A549 (cell line): ENCODE measurements at regions of chr15 and their contacts with region 1.

Region 1: DNA sequence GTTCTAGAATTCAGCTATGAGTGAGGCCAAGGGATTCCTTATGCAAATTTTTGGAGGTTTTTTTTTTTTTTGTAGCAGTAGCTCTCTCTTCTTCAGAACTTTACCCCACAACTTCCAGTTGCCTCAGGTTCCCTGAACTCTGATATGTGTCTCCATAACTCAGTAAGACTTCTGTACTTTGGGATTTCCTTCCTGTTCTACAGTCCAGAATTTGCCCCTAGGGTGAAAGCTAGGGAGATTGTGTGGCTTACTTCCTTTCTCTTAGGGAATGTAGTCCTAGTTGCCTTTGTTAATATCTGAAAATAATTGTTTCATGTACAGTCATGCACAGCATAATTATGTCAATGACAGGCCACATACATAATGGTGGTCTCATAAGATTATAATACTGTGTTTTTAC is 30.8 kb downstream of the LRRC28 start:
- DNase-seq: no peak
- ATAC-seq: no peak
- H3K4me3 ChIP-seq: no peak overlapping the region
- H3K27ac ChIP-seq: no peak overlapping the region
- H3K4me1 ChIP-seq: peaks cover under 1% of the 10 kb centered on the region; the same call in 2 of the 3 replicates
- CTCF ChIP-seq: no peak
- EP300 ChIP-seq: no peak
- POLR2A ChIP-seq: no peak
- RAD21 ChIP-seq: no peak

Region 2: GRCh38 chr15:98842192-98842966 is 439.7 kb before region 1 on chr15:
- CTCF ChIA-PET with region 1: no interaction called
- POLR2A ChIA-PET with region 1: no interaction called
- DNase-seq: no peak
- ATAC-seq: peak in 1 of 2 experiments; percentile 16; a peak in 3 of 6 replicates
- H3K4me3 ChIP-seq: peak overlapping the region; percentile 32; the same call in 1 of the 3 replicates
- H3K27ac ChIP-seq: peak overlapping the region; percentile 54 to 74
- H3K4me1 ChIP-seq: peaks cover 66% of the 10 kb centered on the region
- CTCF ChIP-seq: no peak
- EP300 ChIP-seq: no peak
- POLR2A ChIP-seq: no peak
- RAD21 ChIP-seq: no peak

Region 3: DNA sequence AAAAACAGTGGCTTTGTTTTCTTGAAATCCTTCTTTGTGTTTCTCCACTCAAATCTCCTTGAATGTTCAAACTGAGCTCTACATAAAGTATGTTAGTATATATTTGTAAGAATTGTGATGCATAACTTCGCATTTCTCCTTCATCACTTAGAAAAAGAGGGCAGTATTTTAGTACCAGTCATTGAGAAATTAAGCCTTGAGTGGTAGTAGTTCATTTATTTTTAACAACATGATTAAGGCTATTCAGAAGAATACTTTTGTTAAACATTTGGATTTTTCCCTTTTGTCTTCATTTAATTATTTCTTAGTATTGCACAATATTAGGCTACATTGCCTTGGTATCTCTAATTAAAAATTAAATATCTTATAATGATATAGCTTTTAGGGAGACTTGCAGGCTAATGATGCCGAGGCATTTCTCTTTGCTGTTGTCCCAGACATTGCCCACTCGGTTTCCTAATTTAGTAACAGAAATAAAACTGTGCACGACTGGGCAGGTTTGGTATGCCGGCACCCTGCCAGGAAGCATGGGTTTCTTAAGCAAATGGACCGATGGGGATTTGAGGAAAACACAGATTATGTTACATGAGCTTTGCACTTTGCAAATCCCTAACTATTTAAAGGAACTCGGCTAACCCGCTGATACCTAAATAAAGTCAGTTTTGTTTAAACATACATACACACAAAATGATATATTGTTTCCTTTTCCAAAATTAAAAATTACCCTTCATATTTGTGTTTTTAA is 23.8 kb after region 1 on chr15:
- CTCF ChIA-PET with region 1: interaction called, 10 read pairs
- POLR2A ChIA-PET with region 1: no interaction called
- DNase-seq: peak in 1 of 2 experiments; percentile 72
- ATAC-seq: peak; percentile 74 to 78; a peak in 4 of 6 replicates
- H3K4me3 ChIP-seq: peak overlapping the region; percentile 4; the same call in 1 of the 3 replicates
- H3K27ac ChIP-seq: peak overlapping the region; percentile 24 to 45; a peak in 4 of 6 replicates
- H3K4me1 ChIP-seq: peaks cover 31% of the 10 kb centered on the region
- CTCF ChIP-seq: no peak
- EP300 ChIP-seq: no peak
- POLR2A ChIP-seq: no peak
- RAD21 ChIP-seq: no peak; a peak in 1 of 5 replicates

Region 4: GRCh38 chr15:99409097-99409473 is 127.0 kb after region 1 on chr15:
- CTCF ChIA-PET with region 1: interaction called, 12 read pairs
- POLR2A ChIA-PET with region 1: no interaction called
- DNase-seq: peak; percentile 75 to 76
- ATAC-seq: peak; percentile 93 to 95
- H3K4me3 ChIP-seq: no peak overlapping the region
- H3K27ac ChIP-seq: peak overlapping the region in 1 of 2 experiments; percentile 42; a peak in 2 of 6 replicates
- H3K4me1 ChIP-seq: peaks cover 17% of the 10 kb centered on the region
- CTCF ChIP-seq: peak; percentile 59
- EP300 ChIP-seq: no peak
- POLR2A ChIP-seq: no peak
- RAD21 ChIP-seq: peak; percentile 76 to 82

Region 5: GRCh38 chr15:99712415-99712814 is 430.3 kb after region 1 on chr15:
- CTCF ChIA-PET with region 1: interaction called, 10 read pairs
- POLR2A ChIA-PET with region 1: no interaction called
- DNase-seq: no peak
- ATAC-seq: no peak
- H3K4me3 ChIP-seq: no peak overlapping the region
- H3K27ac ChIP-seq: no peak overlapping the region
- H3K4me1 ChIP-seq: peaks cover 15% of the 10 kb centered on the region; the same call in 2 of the 3 replicates
- CTCF ChIP-seq: no peak
- EP300 ChIP-seq: no peak
- POLR2A ChIP-seq: no peak
- RAD21 ChIP-seq: no peak

Region 6: DNA sequence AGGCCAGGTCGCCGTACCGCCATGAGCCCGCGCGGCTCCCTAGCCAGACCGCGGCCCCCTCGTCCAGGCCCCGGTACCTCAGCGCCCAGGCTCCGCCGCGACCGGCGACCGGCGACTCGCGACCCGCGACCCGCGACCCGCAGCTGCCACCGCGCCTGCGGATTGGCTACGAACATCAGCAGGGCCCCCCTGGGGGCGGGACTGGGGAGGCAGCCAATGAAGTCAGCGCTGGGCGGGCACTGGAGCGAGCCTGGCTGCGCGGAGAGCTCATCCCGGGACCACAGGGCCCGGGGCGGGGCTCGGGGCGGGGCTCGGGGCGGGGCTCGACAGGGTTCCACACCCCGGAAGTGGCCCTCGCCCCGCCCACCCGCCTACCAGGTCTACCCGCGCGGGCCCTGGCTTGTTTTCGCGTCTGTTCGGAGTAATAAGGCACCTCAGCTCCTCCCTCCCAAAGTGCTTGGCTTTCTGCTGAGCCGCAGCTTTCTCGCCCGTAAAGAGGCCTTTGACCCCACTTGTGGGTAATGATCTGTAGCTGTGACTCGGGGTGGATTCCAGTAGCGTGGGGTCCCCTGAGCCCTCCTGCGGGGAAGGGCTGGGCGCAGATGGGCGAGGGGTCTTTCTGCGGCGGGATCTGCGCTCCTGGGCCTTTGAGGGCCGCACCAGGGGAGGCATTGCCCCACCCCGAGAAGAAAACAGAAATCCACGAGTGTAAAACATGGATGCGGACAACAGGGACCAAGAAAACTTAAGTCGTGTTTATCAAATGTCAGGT is 451.3 kb after region 1 on chr15 and contains the start of gene LYSMD4:
- CTCF ChIA-PET with region 1: interaction called, 3 read pairs
- POLR2A ChIA-PET with region 1: interaction called, 10 read pairs
- DNase-seq: peak; percentile 94 to 96
- ATAC-seq: peak; percentile 96 to 99
- H3K4me3 ChIP-seq: peak within 1 kb of the TSS; percentile 61
- H3K27ac ChIP-seq: peak within 1 kb of the TSS; percentile 85 to 90
- H3K4me1 ChIP-seq: peaks cover 10% of the 10 kb centered on the region; the same call in 1 of the 3 replicates
- CTCF ChIP-seq: no peak
- EP300 ChIP-seq: no peak
- POLR2A ChIP-seq: peak; percentile 69
- RAD21 ChIP-seq: no peak
- polyA plus RNA-seq, gene LYSMD4: 3.8 TPM in 2 replicates

Region 7: GRCh38 chr15:99755692-99756409 is 473.7 kb after region 1 on chr15:
- CTCF ChIA-PET with region 1: interaction called, 92 read pairs
- POLR2A ChIA-PET with region 1: no interaction called
- DNase-seq: peak; percentile 71 to 84
- ATAC-seq: peak; percentile 85 to 96
- H3K4me3 ChIP-seq: no peak overlapping the region
- H3K27ac ChIP-seq: no peak overlapping the region
- H3K4me1 ChIP-seq: no peaks in the 10 kb centered on the region
- CTCF ChIP-seq: peak; percentile 90
- EP300 ChIP-seq: no peak
- POLR2A ChIP-seq: no peak
- RAD21 ChIP-seq: peak; percentile 89 to 94